ENCODE measurements at regions of chr22 and their contacts with region 1.

Region 1: DNA sequence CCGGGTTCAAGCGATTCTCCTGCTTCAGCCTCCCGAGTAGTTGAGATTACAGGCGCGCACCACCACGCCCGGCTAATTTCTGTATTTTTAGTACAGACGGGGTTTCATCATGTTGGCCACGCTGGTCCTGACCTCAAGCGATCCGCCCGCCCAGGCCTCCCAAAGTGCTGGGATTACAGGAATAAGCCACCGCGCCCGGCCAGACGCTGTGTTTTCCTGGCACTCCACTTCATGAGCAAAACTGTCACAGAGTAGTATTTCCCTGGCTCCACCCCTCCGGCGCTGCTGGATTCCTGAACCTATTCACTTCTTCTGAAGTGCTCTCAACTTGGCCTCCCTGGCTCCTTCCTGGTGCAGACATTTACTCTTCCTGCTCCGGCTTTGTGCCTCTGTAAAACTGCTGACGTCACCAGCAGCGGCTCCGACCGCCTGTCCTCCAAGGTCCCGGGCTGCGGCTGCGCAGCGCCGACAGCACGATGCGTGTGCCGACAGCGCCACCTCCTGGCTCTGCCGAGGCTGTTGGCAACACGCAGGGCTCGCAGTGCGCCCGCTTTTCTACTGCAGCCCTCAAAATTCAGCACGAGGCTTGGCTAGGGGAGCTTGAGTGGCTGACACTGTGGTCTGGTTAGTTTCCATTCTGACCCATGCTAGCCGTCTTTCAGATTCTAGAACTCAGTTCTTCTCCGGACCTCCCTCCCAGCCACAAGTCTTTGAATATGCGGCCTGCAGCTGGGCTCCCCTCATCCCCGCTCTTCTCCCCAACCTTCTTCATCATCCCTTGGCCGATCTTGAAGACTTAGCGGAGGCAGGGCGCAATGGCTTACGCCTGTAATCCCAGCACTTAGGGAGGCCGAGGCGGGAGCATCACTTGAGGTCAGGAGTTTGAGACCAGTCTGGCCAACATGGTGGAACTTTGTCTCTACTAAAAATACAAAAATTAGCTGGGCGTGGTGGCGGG is 36.6 kb downstream of the APOL3 start:
- DNase-seq: peak; percentile 90
- CTCF ChIP-seq: peak; percentile 99

Region 2: DNA sequence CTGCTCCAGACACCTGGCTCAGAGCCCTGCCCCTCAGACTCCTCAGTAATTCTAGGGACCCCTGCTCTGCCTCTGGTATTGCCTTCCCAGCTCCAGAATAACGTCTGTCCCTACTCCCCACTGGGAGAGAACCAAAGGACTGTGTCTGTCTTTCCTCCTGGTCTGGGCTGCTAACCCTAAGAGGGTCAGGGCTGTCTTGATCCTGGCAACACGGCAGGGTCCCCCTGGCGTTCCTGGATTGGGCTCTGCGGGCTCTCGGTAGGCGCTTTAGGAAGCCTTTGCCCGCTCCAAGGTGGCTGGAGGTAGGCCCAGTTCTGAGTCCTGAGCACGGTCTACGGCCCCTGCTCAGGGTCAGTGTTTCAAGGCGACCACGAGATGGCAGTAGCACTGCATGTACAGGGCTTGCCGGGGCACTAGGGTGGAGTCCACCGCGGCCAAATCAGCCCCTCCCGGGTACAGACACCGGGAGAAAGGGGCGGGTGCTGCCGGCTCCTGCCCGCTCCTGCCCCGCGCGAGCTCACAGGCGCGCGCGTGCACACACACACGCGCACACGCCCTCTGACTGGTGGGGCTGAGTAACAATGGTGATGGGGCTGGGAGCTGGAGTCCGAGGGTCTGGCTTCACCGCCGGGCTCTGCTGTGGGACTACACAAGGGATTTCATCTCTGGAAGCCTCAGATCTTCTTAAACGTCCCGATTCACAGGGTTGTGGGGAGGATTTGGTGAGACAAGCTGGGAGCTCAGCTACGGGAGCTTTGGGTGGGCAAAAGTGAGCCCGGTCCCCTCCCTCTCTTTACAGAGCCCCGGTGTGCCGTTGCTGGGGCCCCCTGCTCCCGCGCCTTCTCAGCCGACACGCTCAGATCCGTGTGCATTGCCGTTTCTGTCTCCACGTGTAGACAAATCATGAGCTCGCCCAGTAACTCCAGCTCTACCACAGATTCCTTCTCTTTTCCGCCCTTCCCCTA is 773.1 kb before region 1 on chr22:
- in situ Hi-C with region 1: loop called (anchors 10 kb)
- DNase-seq: peak; percentile 94
- CTCF ChIP-seq: peak; percentile 92

Region 3: GRCh38 chr22:35601743-35602630 is 522.0 kb before region 1 on chr22:
- in situ Hi-C with region 1: loop called (anchors 25 kb)
- DNase-seq: no peak
- CTCF ChIP-seq: no peak

Region 4: GRCh38 chr22:35914665-35915476 is 209.1 kb before region 1 on chr22:
- in situ Hi-C with region 1: no loop called
- DNase-seq: no peak
- CTCF ChIP-seq: no peak

Region 5: GRCh38 chr22:35930933-35931332 is 193.0 kb before region 1 on chr22:
- in situ Hi-C with region 1: loop called (anchors 10 kb)
- DNase-seq: peak; percentile 50
- CTCF ChIP-seq: peak; percentile 45

Measured in GM13977 (cell line).